ENCODE measurements at regions of chr6 and their contacts with region 1.

Region 1: DNA sequence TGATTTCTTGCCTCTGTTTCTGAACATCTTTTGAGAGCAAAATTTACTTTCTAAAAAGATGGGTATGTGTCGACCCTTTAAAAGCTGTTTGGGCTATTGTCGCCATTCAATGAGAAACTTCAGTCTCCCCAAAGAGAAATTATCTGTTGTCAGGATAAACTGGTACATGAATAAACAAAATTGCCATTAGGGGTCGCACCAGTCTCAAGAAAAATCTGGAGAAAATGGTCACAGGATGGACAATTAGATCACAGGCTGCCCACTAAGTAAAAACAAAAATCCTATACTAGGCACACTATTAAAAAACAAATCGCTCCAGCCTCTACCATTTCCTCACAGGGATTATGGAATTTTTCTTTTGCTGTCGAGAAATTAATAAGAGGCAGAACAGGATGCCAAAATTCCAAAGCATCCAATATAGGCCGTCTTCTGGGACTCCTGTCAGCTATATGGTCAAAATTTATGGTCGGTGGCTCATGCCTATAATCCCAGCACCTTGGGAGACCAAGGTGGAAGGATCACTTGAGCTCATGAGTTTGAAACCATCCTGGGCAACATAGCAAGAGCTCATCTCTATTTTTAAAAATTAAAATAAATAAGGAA is 5.5 kb upstream of the HLA-E start:
- DNase-seq: peak; percentile 54
- ATAC-seq: no peak
- H3K4me3 Mint-ChIP-seq: no peak overlapping the region
- H3K27ac Mint-ChIP-seq: no peak overlapping the region
- H3K4me1 Mint-ChIP-seq: peaks cover 30% of the 10 kb centered on the region
- H3K27me3 Mint-ChIP-seq: peaks cover 47% of the 10 kb centered on the region

Region 2: DNA sequence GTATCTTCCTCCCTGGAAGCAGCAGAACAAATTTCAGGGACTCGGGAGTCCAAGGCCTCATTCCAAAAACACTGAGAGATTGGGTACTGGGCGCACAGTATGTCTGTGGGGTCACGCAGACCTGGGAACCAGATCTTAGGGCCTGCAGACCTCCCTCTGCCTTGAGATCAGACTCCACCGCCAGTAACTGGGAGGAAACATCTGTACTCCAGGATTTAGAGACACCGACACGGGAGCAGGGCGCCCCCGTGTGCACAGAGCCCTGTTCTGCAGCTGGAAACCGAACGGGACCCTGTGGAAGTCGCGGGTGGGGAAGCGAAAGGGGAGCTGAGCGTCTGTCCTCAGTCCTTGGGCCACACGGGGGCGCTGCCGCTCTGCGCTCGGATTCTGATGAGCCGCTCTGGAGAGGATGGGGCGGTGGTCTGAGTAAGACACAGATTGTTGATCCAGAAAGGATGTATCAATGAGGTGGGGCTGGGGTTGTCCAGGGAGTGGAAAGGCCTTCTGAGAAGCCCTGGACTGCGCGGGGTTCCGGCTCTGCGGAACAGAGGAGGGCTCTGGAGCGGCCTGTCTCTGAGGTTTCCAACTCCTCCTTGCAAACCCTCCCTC is 30.2 kb before region 1 on chr6:
- CTCF ChIA-PET with region 1: interaction called, 39 read pairs
- DNase-seq: peak; percentile 88
- ATAC-seq: peak; percentile 83
- H3K4me3 Mint-ChIP-seq: no peak overlapping the region
- H3K27ac Mint-ChIP-seq: no peak overlapping the region
- H3K4me1 Mint-ChIP-seq: peaks cover 30% of the 10 kb centered on the region
- H3K27me3 Mint-ChIP-seq: peaks cover 92% of the 10 kb centered on the region

Region 3: DNA sequence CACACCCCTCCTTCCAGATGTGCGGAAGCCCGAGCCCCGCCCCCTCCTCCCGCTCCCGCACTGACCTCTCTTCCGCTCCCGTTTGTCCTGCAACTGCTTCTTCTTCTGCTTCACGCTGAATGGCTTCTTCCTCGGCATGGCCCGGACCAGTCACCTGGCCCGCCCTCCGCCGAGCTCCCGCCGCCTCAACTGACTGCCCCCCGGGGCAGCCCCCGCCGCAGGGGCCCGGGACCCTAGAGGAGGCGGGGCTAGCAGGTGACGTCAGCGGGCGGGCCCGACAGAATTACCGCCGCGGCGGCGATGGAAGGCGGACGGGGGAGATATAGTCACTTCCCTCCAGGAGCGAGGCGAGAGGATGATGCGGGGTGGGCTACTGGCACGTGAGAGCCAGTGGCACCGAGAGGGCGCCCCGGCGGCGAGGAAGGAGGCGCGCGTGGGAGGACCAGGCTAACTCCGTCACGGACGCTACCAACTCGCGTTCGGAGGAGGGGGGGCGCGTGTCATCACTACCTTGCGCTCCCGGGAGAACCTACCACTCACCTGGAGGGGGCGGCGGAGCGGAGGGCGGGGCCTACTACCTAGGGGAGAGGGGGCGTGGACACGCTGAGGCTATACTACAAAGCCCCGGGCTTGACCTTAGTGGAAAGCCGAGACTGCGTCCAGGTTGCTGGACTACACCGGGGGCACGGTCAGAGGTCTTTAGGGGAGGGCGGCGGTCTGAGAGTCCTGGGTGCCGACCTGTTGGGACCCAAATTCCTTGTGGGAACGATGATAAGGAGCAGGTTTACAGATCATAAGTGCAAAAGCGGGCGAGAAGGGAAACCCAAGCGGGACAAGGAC is 72.5 kb after region 1 on chr6 and contains the start of gene GNL1:
- CTCF ChIA-PET with region 1: interaction called, 15 read pairs
- DNase-seq: peak; percentile 99
- ATAC-seq: peak; percentile 90
- H3K4me3 Mint-ChIP-seq: peak within 1 kb of the TSS; percentile 98
- H3K27ac Mint-ChIP-seq: peak within 1 kb of the TSS; percentile 100
- H3K4me1 Mint-ChIP-seq: peaks cover 34% of the 10 kb centered on the region
- H3K27me3 Mint-ChIP-seq: no peaks in the 10 kb centered on the region
- total RNA-seq, gene GNL1: 64.0 to 73.5 TPM

Region 4: GRCh38 chr6:30590994-30591393 is 107.2 kb after region 1 on chr6:
- CTCF ChIA-PET with region 1: interaction called, 45 read pairs
- DNase-seq: no peak
- ATAC-seq: no peak
- H3K4me3 Mint-ChIP-seq: no peak overlapping the region
- H3K27ac Mint-ChIP-seq: peak overlapping the region; percentile 52
- H3K4me1 Mint-ChIP-seq: no peaks in the 10 kb centered on the region
- H3K27me3 Mint-ChIP-seq: no peaks in the 10 kb centered on the region

Region 5: DNA sequence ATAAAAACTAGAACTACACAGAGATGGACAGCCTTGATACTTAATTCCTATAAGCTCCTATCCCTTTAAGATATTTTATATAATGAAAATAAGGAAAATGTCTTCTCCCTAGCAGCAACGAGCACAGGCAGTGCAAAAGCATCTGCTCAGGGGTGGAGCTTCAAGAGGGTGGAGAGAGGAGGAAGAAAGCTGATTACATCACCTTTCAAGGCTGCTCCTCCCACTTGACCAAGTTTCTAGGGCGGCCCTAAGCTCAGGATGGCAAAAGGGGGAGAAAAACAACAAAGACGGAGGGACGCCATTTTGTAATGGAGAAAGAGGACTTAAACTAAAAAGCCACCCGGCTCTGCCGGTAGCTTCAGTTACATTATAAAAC is 131.1 kb after region 1 on chr6:
- CTCF ChIA-PET with region 1: interaction called, 11 read pairs
- DNase-seq: peak; percentile 94
- ATAC-seq: peak; percentile 59
- H3K4me3 Mint-ChIP-seq: peak overlapping the region; percentile 97
- H3K27ac Mint-ChIP-seq: peak overlapping the region; percentile 100
- H3K4me1 Mint-ChIP-seq: peaks cover 57% of the 10 kb centered on the region
- H3K27me3 Mint-ChIP-seq: peaks cover 3% of the 10 kb centered on the region